ENCODE measurements at regions of chr11 and their contacts with region 1.

Region 1: GRCh38 chr11:124953753-124954589 is at the start of gene CCDC15:
- DNase-seq: peak; percentile 84 to 98 (median 95)
- ATAC-seq: peak; percentile 97
- H3K4me3 ChIP-seq: peak within 1 kb of the TSS; percentile 58 to 86
- H3K4me3 Mint-ChIP-seq: no peak within 1 kb of the TSS
- H3K27ac ChIP-seq: peak within 1 kb of the TSS; percentile 76 to 93
- H3K27ac Mint-ChIP-seq: no peak within 1 kb of the TSS
- H3K4me1 ChIP-seq: peaks cover 50% of the 10 kb centered on the region
- H3K4me1 Mint-ChIP-seq: peaks cover 2% of the 10 kb centered on the region
- H3K27me3 ChIP-seq: no peaks in the 10 kb centered on the region
- H3K27me3 Mint-ChIP-seq: no peaks in the 10 kb centered on the region
- CTCF ChIP-seq: no peak
- total RNA-seq, gene CCDC15: 0.56 to 0.57 TPM

Region 2: GRCh38 chr11:123741159-123742028 is 1212.6 kb before region 1 on chr11 and contains the start of gene ZNF202:
- CTCF ChIA-PET with region 1: no interaction called
- POLR2A ChIA-PET with region 1: no interaction called
- intact Hi-C with region 1: loop called (anchors 5 kb)
- DNase-seq: peak; percentile 78 to 94 (median 93)
- ATAC-seq: peak; percentile 93
- H3K4me3 ChIP-seq: peak within 1 kb of the TSS; percentile 51 to 91
- H3K4me3 Mint-ChIP-seq: peak within 1 kb of the TSS; percentile 94
- H3K27ac ChIP-seq: peak within 1 kb of the TSS; percentile 36 to 84
- H3K27ac Mint-ChIP-seq: peak within 1 kb of the TSS; percentile 92
- H3K4me1 ChIP-seq: peaks cover 26% of the 10 kb centered on the region
- H3K4me1 Mint-ChIP-seq: peaks cover 49% of the 10 kb centered on the region
- H3K27me3 ChIP-seq: no peaks in the 10 kb centered on the region
- H3K27me3 Mint-ChIP-seq: no peaks in the 10 kb centered on the region
- CTCF ChIP-seq: peak; percentile 30
- total RNA-seq, gene ZNF202: 10.7 to 11.4 TPM

Region 3: GRCh38 chr11:124746621-124747243 is 207.2 kb before region 1 on chr11:
- CTCF ChIA-PET with region 1: interaction called, 4 read pairs
- POLR2A ChIA-PET with region 1: no interaction called
- intact Hi-C with region 1: loop called (anchors 5 to 10 kb)
- DNase-seq: peak; percentile 64 to 90 (median 79)
- ATAC-seq: peak; percentile 92
- H3K4me3 ChIP-seq: peak overlapping the region; percentile 87 to 98
- H3K4me3 Mint-ChIP-seq: peak overlapping the region; percentile 95
- H3K27ac ChIP-seq: peak overlapping the region; percentile 58 to 80
- H3K27ac Mint-ChIP-seq: peak overlapping the region; percentile 91
- H3K4me1 ChIP-seq: peaks cover 11% of the 10 kb centered on the region
- H3K4me1 Mint-ChIP-seq: peaks cover 15% of the 10 kb centered on the region
- H3K27me3 ChIP-seq: no peaks in the 10 kb centered on the region
- H3K27me3 Mint-ChIP-seq: peaks cover 2% of the 10 kb centered on the region
- CTCF ChIP-seq: peak; percentile 55

Region 4: DNA sequence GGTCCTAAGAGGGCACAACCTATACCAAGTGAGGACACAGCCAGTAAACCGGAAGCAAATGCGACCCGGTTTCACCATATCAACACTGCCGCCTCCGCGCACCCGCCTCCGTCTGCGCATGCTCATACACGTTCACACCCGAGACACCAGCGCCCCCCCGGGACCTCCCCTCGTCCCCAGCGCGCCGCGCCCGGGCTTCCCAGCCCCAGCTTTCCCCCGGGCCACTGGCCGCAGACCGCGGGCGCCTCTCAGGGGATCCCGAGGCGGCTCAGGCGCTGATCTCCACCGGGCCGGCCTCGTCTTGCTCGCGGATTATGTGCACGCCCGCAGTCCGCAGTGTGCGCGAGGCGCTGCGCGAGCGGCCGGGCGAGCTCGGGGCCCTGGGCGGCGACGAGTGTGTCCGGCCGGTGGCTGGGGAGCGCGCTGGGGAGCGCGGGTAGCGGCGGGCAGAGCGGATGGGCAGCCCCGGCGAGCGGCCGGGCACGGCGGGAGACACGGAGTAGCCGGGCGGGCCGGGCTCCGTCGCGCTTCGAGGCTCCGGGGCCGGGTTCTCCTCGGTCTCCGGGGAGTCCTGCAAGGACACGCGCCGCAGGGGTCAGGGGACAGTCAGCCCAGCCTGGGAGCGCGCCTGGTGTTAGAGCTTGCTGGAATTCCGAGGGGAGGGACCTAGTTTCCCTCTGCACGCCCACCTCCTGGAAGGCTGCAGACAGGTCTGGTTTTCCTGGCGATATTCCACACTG is 32.9 kb before region 1 on chr11:
- CTCF ChIA-PET with region 1: interaction called, 6 read pairs
- POLR2A ChIA-PET with region 1: interaction called, 14 read pairs
- intact Hi-C with region 1: loop called (anchors 1 to 2 kb)
- DNase-seq: peak; percentile 53 to 94 (median 81)
- ATAC-seq: peak; percentile 87
- H3K4me3 ChIP-seq: peak overlapping the region; percentile 25 to 42
- H3K4me3 Mint-ChIP-seq: peak overlapping the region; percentile 83
- H3K27ac ChIP-seq: peak overlapping the region in 1 of 2 experiments; percentile 42
- H3K27ac Mint-ChIP-seq: peak overlapping the region; percentile 77
- H3K4me1 ChIP-seq: peaks cover 28% of the 10 kb centered on the region
- H3K4me1 Mint-ChIP-seq: peaks cover 27% of the 10 kb centered on the region
- H3K27me3 ChIP-seq: no peaks in the 10 kb centered on the region
- H3K27me3 Mint-ChIP-seq: no peaks in the 10 kb centered on the region
- CTCF ChIP-seq: no peak

Region 5: DNA sequence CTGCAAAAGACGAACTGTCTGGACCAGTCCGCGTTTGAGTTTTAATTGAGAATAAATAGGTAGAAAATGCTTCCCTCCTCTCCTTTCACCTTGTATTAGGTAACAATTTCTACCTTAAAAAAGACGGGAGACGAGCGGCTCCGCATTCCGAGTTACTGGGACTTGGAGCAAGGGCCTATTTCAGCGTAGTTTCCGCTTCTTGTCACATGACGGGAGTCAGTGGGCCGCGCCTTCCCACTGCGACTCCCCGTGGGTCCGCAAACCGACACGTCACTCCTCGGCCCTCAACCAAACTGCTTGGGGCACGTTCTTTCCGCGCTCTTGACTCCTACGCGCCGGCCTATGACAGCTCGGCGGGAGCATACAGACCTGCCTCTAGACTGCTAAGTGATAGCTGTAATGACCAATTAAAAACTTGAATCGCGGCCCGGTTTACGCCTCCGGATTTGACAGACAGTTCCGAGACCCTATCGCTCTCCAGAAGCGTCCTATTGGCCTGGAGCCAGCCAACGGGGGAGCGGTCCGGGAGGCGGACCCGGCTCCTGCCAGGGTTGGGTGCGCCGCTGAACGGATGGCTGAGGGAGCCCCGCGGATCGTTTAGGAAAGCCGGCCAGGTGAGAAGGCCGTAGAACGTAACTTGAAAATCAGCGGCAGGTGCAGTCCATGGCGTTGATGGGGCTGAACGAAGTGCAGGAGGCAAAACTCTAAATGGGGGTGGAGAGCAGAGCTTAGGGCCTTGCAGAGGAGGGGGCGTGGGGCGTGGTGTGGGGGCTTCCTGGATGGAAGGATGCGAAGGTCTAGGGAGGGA is 638.5 kb after region 1 on chr11 and contains the start of gene STT3A:
- CTCF ChIA-PET with region 1: no interaction called
- POLR2A ChIA-PET with region 1: no interaction called
- intact Hi-C with region 1: loop called (anchors 1 to 10 kb)
- DNase-seq: peak; percentile 96 to 99 (median 98)
- ATAC-seq: peak; percentile 91
- H3K4me3 ChIP-seq: peak within 1 kb of the TSS; percentile 90 to 97
- H3K4me3 Mint-ChIP-seq: peak within 1 kb of the TSS; percentile 92
- H3K27ac ChIP-seq: peak within 1 kb of the TSS; percentile 88 to 96
- H3K27ac Mint-ChIP-seq: peak within 1 kb of the TSS; percentile 98
- H3K4me1 ChIP-seq: peaks cover 15% of the 10 kb centered on the region
- H3K4me1 Mint-ChIP-seq: peaks cover 43% of the 10 kb centered on the region
- H3K27me3 ChIP-seq: no peaks in the 10 kb centered on the region
- H3K27me3 Mint-ChIP-seq: no peaks in the 10 kb centered on the region
- CTCF ChIP-seq: no peak
- total RNA-seq, gene STT3A: 45.5 to 46.8 TPM

Region 6: DNA sequence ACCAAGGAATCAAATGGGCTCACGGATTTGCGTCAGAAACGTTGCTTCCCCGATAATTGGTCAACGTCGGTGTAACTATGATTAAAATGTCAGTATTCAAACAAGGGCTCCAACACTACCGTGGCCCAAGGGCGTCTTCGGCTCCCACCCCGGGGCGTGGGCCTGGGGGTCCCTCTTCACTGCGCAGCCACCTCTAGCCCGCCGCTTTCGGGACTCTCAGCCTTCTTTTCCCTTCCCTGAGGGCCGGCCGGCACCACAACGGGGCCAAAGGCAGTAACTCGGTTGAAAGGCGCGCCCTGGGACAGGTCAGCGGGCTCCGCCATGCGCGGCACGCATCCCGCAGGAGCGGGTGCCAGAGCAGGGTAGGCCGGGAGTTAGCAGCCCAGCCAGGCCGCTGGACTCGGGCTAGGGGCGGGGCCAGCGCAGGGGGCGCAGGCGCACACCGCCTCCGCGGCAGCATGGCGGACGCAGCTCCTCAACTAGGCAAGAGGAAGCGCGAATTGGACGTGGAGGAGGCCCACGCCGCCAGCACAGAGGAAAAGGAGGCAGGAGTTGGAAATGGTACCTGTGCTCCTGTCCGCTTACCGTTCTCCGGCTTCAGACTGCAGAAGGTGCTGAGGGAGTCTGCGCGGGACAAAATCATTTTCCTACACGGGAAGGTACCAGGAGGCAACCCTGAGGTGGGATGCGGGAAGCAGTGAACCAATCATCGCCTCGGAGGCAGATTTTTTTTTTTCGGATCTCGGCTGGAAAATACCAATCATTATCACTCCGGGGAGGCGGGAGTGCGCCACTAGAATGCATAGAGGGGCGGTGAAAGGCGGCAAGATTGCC is 1349.9 kb after region 1 on chr11 and contains the start of gene DCPS:
- CTCF ChIA-PET with region 1: no interaction called
- POLR2A ChIA-PET with region 1: no interaction called
- intact Hi-C with region 1: loop called in 1 of 2 experiments (anchors 10 kb)
- DNase-seq: peak; percentile 66 to 92 (median 84)
- ATAC-seq: peak; percentile 96
- H3K4me3 ChIP-seq: peak within 1 kb of the TSS; percentile 93 to 97
- H3K4me3 Mint-ChIP-seq: peak within 1 kb of the TSS; percentile 88
- H3K27ac ChIP-seq: peak within 1 kb of the TSS; percentile 92 to 94
- H3K27ac Mint-ChIP-seq: peak within 1 kb of the TSS; percentile 89
- H3K4me1 ChIP-seq: peaks cover 21% of the 10 kb centered on the region
- H3K4me1 Mint-ChIP-seq: peaks cover 35% of the 10 kb centered on the region
- H3K27me3 ChIP-seq: no peaks in the 10 kb centered on the region
- H3K27me3 Mint-ChIP-seq: no peaks in the 10 kb centered on the region
- CTCF ChIP-seq: no peak
- total RNA-seq, gene DCPS: 7.3 to 7.5 TPM